IMR-90 (cell line): ENCODE measurements at regions of chr9 and their contacts with region 1.

Region 1: DNA sequence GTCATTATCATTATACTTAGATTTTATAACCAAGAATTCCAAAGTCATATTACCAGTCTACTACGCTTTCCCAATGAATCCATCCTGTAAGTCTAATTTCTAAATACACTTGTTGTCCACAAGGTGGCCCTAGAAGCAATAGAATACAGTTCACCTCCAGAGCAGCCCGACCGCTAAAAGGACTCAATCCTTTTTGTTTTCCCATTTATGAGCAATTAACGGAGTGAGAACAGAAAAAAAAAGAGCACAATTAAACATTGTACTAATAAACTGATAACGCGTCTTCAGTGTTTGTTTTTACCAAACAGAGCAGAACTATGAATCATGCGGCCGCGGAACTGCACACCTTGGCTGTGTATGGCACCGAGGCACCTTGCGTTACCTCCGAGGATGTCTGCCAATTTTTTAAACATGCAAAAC is 160.7 kb upstream of the DAPK1 start:
- DNase-seq: peak; percentile 79
- ATAC-seq: peak; percentile 85
- H3K4me3 ChIP-seq: peak overlapping the region; percentile 30
- H3K27ac ChIP-seq: no peak overlapping the region
- H3K4me1 ChIP-seq: peaks cover 4% of the 10 kb centered on the region; the same call in 1 of the 2 replicates
- H3K27me3 ChIP-seq: peaks cover 25% of the 10 kb centered on the region
- CTCF ChIP-seq: peak; percentile 69
- POLR2A ChIP-seq: no peak
- RAD21 ChIP-seq: peak; percentile 79

Region 2: GRCh38 chr9:87382902-87383301 is 46.0 kb after region 1 on chr9:
- CTCF ChIA-PET with region 1: no interaction called
- POLR2A ChIA-PET with region 1: no interaction called
- dilution Hi-C with region 1: no loop called
- in situ Hi-C with region 1: no loop called
- intact Hi-C with region 1: no loop called
- DNase-seq: peak; percentile 10
- ATAC-seq: no peak
- H3K4me3 ChIP-seq: no peak overlapping the region
- H3K27ac ChIP-seq: no peak overlapping the region
- H3K4me1 ChIP-seq: peaks cover 2% of the 10 kb centered on the region; the same call in 1 of the 2 replicates
- H3K27me3 ChIP-seq: no peaks in the 10 kb centered on the region
- CTCF ChIP-seq: no peak
- POLR2A ChIP-seq: no peak
- RAD21 ChIP-seq: no peak

Region 3: DNA sequence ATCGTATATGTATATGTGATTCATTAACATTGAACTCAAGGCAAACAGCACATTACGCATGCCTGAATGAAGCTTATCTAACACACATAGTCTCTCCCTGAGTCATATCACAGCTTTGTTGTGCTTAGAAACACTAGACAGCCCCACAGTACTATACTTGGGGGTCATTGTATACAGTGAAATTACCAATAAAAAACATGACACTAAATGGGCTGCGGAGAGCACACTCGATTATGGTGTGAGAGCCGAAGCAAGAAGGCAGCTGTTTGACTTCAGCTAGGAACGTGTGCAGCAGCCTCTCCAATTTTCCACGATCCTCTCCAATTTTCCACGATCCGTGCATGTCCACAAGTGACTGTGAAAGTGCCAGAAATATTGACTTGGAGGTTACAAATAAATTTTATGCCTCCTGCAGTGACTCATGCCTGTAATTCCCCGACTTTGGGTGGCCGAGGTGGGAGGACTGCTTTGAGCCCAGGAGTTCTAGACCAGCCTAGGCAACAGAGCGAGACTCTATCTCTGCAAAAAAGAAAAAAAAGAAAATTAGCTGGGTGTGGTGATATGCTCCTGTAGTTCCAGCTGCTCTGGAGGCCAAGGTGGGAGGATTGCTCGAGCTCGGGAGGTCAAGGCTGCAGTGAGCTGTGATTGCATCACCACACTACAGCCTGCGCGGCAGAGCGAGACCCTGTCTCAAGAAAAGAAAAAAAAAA is 263.1 kb after region 1 on chr9:
- CTCF ChIA-PET with region 1: interaction called, 3 read pairs
- POLR2A ChIA-PET with region 1: no interaction called
- dilution Hi-C with region 1: no loop called
- in situ Hi-C with region 1: no loop called
- intact Hi-C with region 1: loop called (anchors 5 kb)
- DNase-seq: peak; percentile 94
- ATAC-seq: peak; percentile 99
- H3K4me3 ChIP-seq: no peak overlapping the region
- H3K27ac ChIP-seq: peak overlapping the region; percentile 18; the same call in 1 of the 2 replicates
- H3K4me1 ChIP-seq: peaks cover 13% of the 10 kb centered on the region
- H3K27me3 ChIP-seq: peaks cover 2% of the 10 kb centered on the region; the same call in 1 of the 2 replicates
- CTCF ChIP-seq: no peak
- POLR2A ChIP-seq: no peak
- RAD21 ChIP-seq: no peak

Region 4: DNA sequence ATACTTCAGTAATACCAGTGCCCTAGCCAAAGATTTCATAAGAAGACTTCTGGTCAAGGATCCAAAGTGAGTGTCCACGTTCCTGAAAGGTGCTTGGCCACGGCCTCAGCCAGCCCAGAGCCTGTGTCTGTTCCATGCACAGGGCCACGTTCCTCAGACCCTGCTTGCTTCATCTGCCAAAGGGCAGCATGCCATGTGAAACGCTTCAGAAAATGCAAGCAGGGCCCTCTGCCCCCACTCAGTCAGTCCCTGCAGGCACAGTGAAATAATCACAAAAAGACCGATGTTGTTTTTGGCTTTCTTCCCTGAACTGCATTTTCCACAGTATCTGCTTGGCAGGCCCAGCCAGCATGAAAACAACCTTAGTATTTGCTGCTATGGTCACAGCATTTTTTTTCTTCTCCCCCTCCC is 303.5 kb after region 1 on chr9:
- CTCF ChIA-PET with region 1: no interaction called
- POLR2A ChIA-PET with region 1: no interaction called
- dilution Hi-C with region 1: no loop called
- in situ Hi-C with region 1: no loop called
- intact Hi-C with region 1: loop called (anchors 5 kb)
- DNase-seq: peak; percentile 13
- ATAC-seq: peak; percentile 57
- H3K4me3 ChIP-seq: no peak overlapping the region
- H3K27ac ChIP-seq: no peak overlapping the region
- H3K4me1 ChIP-seq: peaks cover 2% of the 10 kb centered on the region; the same call in 1 of the 2 replicates
- H3K27me3 ChIP-seq: peaks cover 9% of the 10 kb centered on the region
- CTCF ChIP-seq: no peak
- POLR2A ChIP-seq: no peak
- RAD21 ChIP-seq: no peak

Region 5: GRCh38 chr9:87662808-87663528 is 326.0 kb after region 1 on chr9:
- CTCF ChIA-PET with region 1: interaction called, 15 read pairs
- POLR2A ChIA-PET with region 1: no interaction called
- dilution Hi-C with region 1: loop called (anchors 10 kb)
- in situ Hi-C with region 1: loop called (anchors 5 kb)
- intact Hi-C with region 1: loop called (anchors 1 kb)
- DNase-seq: peak; percentile 44
- ATAC-seq: peak; percentile 91
- H3K4me3 ChIP-seq: no peak overlapping the region
- H3K27ac ChIP-seq: no peak overlapping the region
- H3K4me1 ChIP-seq: no peaks in the 10 kb centered on the region
- H3K27me3 ChIP-seq: no peaks in the 10 kb centered on the region; the same call in 1 of the 2 replicates
- CTCF ChIP-seq: peak; percentile 77
- POLR2A ChIP-seq: no peak
- RAD21 ChIP-seq: peak; percentile 85

Region 6: DNA sequence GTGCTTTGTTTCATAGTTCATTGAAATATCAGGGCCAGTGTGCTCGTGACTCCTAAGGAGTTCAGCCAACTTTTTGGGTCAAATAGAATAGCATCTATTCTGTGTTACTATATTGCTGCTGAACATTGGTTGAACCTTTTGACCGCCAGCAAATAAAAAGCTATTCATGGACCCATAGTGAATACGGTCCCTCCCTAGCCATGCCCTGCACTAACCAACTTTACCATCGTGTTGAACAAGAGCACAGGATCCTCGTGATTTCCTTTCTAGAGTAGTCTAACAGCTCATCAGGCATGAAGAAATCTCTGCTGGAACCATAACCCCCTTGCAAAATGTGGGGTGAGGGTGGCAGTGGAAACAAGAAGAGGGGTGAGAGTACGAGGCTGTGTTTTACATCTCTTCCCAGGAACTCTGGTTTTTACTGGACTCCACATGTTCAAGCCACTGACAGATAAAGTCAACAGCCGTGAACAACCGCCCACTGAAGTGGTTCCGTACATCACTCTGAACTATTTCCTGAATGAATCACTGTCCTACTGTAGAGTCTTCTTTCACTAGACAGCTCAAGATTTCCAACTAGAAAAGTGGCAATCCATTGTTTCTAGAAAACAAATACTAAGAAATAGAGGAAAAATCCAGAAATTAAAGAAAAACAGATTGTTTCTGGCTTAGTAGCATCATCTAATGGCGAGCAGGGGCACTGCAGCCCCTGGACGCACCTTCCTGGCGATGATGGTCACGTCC is 475.6 kb after region 1 on chr9:
- CTCF ChIA-PET with region 1: no interaction called
- POLR2A ChIA-PET with region 1: no interaction called
- dilution Hi-C with region 1: no loop called
- in situ Hi-C with region 1: no loop called
- intact Hi-C with region 1: loop called (anchors 1 kb)
- DNase-seq: peak; percentile 66
- ATAC-seq: peak; percentile 91
- H3K4me3 ChIP-seq: no peak overlapping the region
- H3K27ac ChIP-seq: no peak overlapping the region
- H3K4me1 ChIP-seq: no peaks in the 10 kb centered on the region
- H3K27me3 ChIP-seq: peaks cover 15% of the 10 kb centered on the region
- CTCF ChIP-seq: peak; percentile 92
- POLR2A ChIP-seq: no peak
- RAD21 ChIP-seq: peak; percentile 83